ENCODE measurements at regions of chr9 and their contacts with region 1.

Region 1: GRCh38 chr9:107172160-107172978 is 110.7 kb upstream of the RAD23B start:
- DNase-seq: peak; percentile 77 to 86
- H3K4me3 ChIP-seq: no peak overlapping the region
- H3K27ac ChIP-seq: no peak overlapping the region
- H3K4me1 ChIP-seq: no peaks in the 10 kb centered on the region
- H3K27me3 ChIP-seq: no peaks in the 10 kb centered on the region
- CTCF ChIP-seq: peak; percentile 52 to 95 (median 86)
- POLR2A ChIP-seq: no peak

Region 2: GRCh38 chr9:106648799-106649198 is 523.6 kb before region 1 on chr9:
- intact Hi-C with region 1: loop called (anchors 5 kb)
- DNase-seq: no peak
- H3K4me3 ChIP-seq: no peak overlapping the region
- H3K27ac ChIP-seq: no peak overlapping the region
- H3K4me1 ChIP-seq: no peaks in the 10 kb centered on the region
- H3K27me3 ChIP-seq: no peaks in the 10 kb centered on the region
- CTCF ChIP-seq: peak in 5 of 6 experiments; percentile 10 to 53 (median 47)
- POLR2A ChIP-seq: no peak

Region 3: GRCh38 chr9:107237873-107238272 is 65.5 kb after region 1 on chr9:
- intact Hi-C with region 1: no loop called
- DNase-seq: no peak
- H3K4me3 ChIP-seq: no peak overlapping the region
- H3K27ac ChIP-seq: no peak overlapping the region
- H3K4me1 ChIP-seq: no peaks in the 10 kb centered on the region
- H3K27me3 ChIP-seq: no peaks in the 10 kb centered on the region
- CTCF ChIP-seq: no peak
- POLR2A ChIP-seq: no peak

Measured in thyroid gland (tissue), 4 donors.